ENCODE measurements at regions of chr5 and their contacts with region 1.

Region 1: GRCh38 chr5:180494060-180494509 is at the start of gene CNOT6:
- DNase-seq: peak; percentile 92
- H3K4me3 Mint-ChIP-seq: peak within 1 kb of the TSS; percentile 82
- H3K27ac Mint-ChIP-seq: peak within 1 kb of the TSS; percentile 85
- H3K4me1 Mint-ChIP-seq: peaks cover 31% of the 10 kb centered on the region
- H3K27me3 Mint-ChIP-seq: no peaks in the 10 kb centered on the region
- total RNA-seq, gene CNOT6: 33.3 to 34.0 TPM

Region 2: DNA sequence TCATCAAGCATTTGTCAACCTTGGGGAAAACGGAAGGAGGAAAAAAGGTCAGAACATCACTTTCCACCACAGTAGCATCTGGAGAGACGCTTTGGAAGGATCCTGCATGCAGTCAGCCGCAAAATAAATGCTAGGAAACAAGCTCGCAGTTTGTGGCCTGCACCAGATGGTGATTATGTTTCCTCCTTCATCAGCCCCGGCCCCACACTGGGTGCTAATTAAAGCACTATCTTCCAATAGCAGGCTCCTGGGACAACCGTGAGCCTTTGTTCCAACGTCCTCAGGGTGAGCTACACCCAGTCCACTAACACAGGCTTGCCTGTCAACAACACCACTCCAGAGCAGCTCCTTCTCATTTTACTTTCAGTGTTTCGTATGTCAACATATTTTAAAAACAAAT is 486.5 kb before region 1 on chr5:
- CTCF ChIA-PET with region 1: no interaction called
- intact Hi-C with region 1: loop called (anchors 2 kb)
- DNase-seq: no peak
- H3K4me3 Mint-ChIP-seq: no peak overlapping the region
- H3K27ac Mint-ChIP-seq: no peak overlapping the region
- H3K4me1 Mint-ChIP-seq: peaks cover 20% of the 10 kb centered on the region
- H3K27me3 Mint-ChIP-seq: no peaks in the 10 kb centered on the region

Region 3: DNA sequence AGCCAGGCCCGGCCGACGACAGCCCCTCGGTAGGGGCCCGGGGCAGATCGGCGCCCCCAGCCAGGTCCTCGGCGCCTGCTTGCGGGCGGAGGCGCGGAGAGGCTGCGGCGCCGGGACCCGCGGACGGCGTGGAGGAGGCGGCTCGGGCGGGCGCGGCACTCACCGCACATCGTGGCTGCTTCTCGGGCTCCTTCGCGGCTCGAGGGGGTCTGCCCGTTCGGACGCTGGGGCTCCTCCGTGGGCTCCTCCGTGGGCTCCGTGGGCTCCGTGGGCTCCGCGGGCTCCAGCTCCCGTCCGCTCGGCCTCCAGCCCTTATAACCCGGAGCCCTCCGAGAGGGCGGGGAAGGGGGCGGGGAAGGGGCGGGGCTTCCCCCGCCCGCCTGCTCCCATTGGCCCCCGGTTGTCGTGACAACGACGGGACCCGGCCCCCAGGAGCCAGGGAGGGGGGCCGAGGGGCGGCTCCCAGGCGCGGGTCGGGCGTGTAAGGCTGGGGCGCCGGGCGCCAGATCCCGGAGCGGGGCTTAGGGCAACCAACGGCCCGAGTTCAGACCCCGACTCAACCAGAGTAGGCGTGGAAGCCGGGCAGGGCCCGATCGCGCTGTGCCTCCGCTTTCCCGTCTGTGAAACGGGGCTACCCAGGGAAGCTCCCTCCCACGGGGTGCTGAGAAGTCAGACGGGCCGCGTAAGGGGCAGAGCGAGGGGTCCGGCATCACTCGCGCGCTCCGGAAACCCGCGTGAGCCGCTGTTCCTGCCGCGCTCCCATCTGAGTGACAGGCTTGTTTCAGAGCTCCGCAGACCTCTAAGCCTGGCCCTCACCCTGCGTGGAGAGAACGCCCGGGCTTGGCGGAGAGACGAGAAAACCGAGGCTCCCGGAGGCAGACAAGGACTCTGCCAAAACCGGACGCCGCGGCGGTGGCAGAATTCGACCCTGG is 140.8 kb before region 1 on chr5 and contains the start of gene GFPT2:
- CTCF ChIA-PET with region 1: no interaction called
- intact Hi-C with region 1: loop called (anchors 10 kb)
- DNase-seq: peak; percentile 69
- H3K4me3 Mint-ChIP-seq: peak within 1 kb of the TSS; percentile 62
- H3K27ac Mint-ChIP-seq: no peak within 1 kb of the TSS
- H3K4me1 Mint-ChIP-seq: peaks cover 7% of the 10 kb centered on the region
- H3K27me3 Mint-ChIP-seq: peaks cover 48% of the 10 kb centered on the region
- total RNA-seq, gene GFPT2: 0.22 to 0.33 TPM

Region 4: GRCh38 chr5:180460834-180461233 is 33.3 kb before region 1 on chr5:
- CTCF ChIA-PET with region 1: no interaction called
- intact Hi-C with region 1: no loop called
- DNase-seq: no peak
- H3K4me3 Mint-ChIP-seq: no peak overlapping the region
- H3K27ac Mint-ChIP-seq: no peak overlapping the region
- H3K4me1 Mint-ChIP-seq: no peaks in the 10 kb centered on the region
- H3K27me3 Mint-ChIP-seq: peaks cover 4% of the 10 kb centered on the region

Region 5: GRCh38 chr5:180605554-180606214 is 111.6 kb after region 1 on chr5:
- CTCF ChIA-PET with region 1: interaction called, 3 read pairs
- intact Hi-C with region 1: loop called (anchors 5 kb)
- DNase-seq: peak; percentile 87
- H3K4me3 Mint-ChIP-seq: no peak overlapping the region
- H3K27ac Mint-ChIP-seq: no peak overlapping the region
- H3K4me1 Mint-ChIP-seq: no peaks in the 10 kb centered on the region
- H3K27me3 Mint-ChIP-seq: no peaks in the 10 kb centered on the region

Region 6: DNA sequence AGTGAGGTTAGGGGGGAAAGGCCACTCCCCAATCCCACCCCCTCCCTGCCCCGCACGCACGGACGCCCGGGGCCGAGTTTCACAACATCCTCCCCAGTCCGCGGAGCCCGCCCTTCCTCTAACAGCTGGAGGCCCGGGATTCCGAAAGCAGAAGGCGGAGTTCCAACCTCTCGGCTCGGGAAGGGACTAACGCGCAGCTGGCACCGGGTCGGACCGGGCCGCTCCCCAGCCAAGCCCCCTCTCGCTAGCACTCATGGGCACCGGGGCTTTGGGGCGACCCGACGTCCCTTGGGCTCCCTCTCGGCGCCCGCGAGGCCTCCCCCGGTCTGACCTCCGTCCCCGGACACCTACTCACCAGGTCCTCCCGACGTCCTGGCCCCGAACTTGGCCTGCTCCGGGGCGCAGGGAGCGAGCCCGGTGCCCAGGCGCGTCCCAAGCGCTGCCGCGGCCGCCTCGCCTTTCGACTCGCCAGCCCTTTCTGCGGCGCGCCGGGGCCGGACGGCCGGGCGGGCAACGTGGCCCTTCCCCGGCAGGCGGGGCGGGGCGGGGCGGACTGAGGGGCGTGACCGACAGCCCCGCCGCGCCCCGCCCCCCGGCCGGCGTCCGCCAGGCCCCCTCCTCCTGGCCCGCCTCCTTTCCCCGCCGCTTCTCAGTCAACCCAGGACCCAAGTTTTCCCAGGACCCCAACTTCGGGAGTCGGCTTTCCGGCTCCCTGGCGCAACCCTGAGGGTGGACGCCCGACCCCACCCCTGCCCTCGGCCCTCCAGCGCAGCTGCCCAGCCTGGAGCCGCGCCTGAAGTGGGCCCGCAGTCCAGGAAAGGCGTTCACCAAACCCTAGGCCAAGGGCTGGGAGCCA is 308.5 kb after region 1 on chr5 and contains the start of gene MGAT1:
- CTCF ChIA-PET with region 1: no interaction called
- intact Hi-C with region 1: loop called (anchors 5 kb)
- DNase-seq: peak; percentile 78
- H3K4me3 Mint-ChIP-seq: peak within 1 kb of the TSS; percentile 98
- H3K27ac Mint-ChIP-seq: peak within 1 kb of the TSS; percentile 99
- H3K4me1 Mint-ChIP-seq: peaks cover 77% of the 10 kb centered on the region
- H3K27me3 Mint-ChIP-seq: no peaks in the 10 kb centered on the region
- total RNA-seq, gene MGAT1: 70.0 to 75.2 TPM

Measured in activated naive CD4-positive, alpha-beta T cell treated with anti-CD3 and anti-CD28 coated beads for 36 hours (primary cell).